ENCODE measurements at regions of chrX and their contacts with region 1.

Region 1: DNA sequence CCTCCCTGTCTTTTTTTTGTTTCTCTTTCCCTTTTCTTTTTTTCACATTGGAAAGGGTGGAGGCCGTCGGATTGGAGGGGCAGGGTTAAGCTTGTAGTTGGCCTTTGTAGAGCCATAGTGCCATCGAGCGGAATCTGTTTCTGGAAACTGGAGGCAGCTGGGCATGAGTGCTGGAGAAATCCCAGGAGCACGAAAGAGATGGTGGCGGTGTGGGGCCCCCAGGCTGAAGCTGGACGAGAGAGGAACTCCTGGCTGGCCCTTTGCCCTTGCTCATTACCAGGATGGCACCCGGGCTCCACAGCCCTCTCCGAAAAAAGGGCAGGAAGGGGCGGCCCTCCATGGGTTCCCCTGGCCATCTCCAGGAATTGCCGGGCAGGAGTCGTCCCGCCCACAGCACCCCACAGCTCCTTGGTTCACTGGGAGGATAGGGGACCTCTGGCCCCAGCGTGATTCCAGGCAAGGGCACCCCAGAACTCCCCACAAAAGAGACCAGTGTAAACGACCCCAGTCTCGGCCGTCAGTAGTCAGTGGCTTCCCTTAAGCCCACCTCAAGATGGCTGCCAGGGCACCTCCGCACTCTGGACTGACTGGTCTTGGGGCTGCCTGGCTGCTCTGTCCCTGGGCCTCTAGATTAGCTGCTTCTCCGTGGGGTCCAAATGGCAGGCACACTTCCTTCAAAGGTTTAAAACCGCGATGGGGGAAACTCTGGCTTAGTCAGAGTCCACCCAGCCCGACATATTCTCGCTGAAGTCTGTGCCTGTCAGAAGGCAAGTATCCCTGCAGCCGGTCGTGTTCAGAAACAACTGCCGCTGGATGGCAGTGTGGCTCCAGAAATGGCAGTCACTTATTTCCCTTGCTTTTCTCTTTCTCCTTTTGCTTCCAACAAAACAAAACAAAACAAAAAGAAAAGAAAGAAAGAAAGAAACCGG is 74.1 kb downstream of the NBDY start:
- DNase-seq: peak; percentile 69
- H3K4me3 Mint-ChIP-seq: no peak overlapping the region
- H3K27ac Mint-ChIP-seq: peak overlapping the region; percentile 42
- H3K4me1 Mint-ChIP-seq: peaks cover 34% of the 10 kb centered on the region
- H3K27me3 Mint-ChIP-seq: no peaks in the 10 kb centered on the region

Region 2: DNA sequence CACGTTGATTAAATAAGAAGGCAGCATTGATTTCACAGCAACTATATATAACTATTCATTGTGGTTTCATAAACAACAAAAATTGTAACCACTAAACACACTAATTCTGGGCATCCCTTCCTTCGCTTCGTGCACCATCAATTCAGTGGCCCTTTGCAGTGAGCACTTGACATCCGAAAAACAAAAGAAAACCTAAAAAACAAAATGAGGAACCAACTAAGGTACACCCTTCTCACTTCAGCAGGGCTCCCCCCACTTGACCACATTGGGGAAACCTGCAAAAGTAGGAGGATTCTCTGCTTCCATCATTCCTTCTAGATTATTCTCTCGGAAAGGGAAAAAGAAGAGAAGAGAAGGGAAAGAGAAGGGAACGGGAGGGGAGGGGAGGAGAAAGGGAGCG is 45.9 kb before region 1 on chrX:
- CTCF ChIA-PET with region 1: no interaction called
- POLR2A ChIA-PET with region 1: no interaction called
- intact Hi-C with region 1: loop called (anchors 10 kb)
- DNase-seq: no peak
- H3K4me3 Mint-ChIP-seq: no peak overlapping the region
- H3K27ac Mint-ChIP-seq: no peak overlapping the region
- H3K4me1 Mint-ChIP-seq: peaks cover 33% of the 10 kb centered on the region
- H3K27me3 Mint-ChIP-seq: no peaks in the 10 kb centered on the region

Region 3: DNA sequence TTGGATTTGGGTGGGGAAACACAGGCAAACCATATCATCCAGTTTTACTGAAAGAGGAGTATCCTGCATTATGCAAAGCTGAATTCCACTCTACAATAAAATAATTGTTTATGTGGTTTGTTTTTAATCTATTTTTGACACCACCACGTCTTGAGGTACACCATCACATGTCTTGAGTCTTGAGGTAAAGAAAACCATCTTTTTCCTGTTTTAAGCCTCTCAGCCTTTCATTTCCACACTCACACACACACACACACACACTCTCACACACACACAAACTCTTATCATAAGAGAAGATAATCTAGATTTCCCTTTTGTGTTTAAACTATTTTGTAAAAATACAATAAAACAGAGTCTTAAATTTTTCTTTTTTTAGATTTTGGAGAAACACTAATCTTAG is 160.2 kb after region 1 on chrX:
- CTCF ChIA-PET with region 1: no interaction called
- POLR2A ChIA-PET with region 1: no interaction called
- intact Hi-C with region 1: no loop called
- DNase-seq: no peak
- H3K4me3 Mint-ChIP-seq: no peak overlapping the region
- H3K27ac Mint-ChIP-seq: no peak overlapping the region
- H3K4me1 Mint-ChIP-seq: peaks cover 7% of the 10 kb centered on the region
- H3K27me3 Mint-ChIP-seq: no peaks in the 10 kb centered on the region

Region 4: DNA sequence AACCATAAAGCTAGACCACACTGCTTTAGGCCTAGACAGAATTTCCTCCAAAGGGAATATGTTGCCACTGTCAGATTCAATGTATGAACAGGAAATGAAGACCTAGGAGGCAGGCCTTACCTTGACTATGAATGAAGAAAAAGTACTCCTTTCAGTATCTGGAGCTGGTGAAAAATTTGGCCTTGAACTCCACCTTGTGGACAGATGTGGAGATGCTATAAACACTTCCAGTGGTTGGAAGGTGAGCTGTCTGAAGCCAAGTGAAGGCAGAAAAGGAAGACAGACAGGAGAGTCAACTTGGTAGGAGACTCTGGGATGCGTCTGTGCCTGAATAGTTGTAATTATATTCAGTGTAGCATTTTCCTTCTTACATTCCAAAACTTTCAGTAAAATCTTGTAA is 175.0 kb after region 1 on chrX:
- CTCF ChIA-PET with region 1: interaction called, 15 read pairs
- POLR2A ChIA-PET with region 1: no interaction called
- intact Hi-C with region 1: loop called (anchors 1 kb)
- DNase-seq: peak; percentile 40
- H3K4me3 Mint-ChIP-seq: no peak overlapping the region
- H3K27ac Mint-ChIP-seq: no peak overlapping the region
- H3K4me1 Mint-ChIP-seq: no peaks in the 10 kb centered on the region
- H3K27me3 Mint-ChIP-seq: no peaks in the 10 kb centered on the region

Region 5: DNA sequence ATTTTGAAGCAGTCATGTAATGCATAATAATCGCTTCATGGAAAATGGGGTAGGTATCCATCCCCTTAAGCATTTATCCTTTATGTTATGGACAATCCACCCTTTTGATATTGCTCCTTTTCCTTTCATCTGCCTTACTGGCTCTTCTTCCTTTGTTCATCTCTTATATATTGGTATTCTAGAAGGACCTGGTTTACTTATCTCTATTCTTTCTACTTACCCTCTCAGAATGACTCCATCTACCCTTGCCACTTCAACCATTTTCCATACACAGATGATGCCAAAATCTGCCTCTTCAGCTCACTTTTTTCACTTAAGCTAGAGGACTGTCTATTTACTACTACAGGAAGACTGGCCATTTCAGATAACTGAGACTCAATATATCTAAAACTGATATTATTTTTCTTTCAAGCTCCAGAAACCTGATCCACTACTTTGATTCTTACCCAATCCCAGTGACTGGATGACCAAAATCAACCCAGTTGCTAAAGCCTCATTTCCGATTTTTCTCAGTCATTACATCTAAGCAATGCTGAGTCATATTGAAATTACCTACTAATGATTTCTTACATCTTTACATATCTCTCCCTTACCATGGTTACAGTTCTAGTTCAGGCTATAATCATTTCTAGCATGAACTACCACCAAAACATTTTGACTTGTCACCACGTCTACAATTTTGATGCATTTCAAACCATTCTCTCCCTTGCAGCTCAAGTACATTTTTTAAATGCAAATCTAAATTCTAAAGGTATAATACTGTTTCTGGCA is 577.0 kb after region 1 on chrX:
- CTCF ChIA-PET with region 1: no interaction called
- POLR2A ChIA-PET with region 1: no interaction called
- intact Hi-C with region 1: loop called (anchors 5 kb)
- DNase-seq: no peak
- H3K4me3 Mint-ChIP-seq: peak overlapping the region; percentile 20
- H3K27ac Mint-ChIP-seq: peak overlapping the region; percentile 87
- H3K4me1 Mint-ChIP-seq: peaks cover 17% of the 10 kb centered on the region
- H3K27me3 Mint-ChIP-seq: no peaks in the 10 kb centered on the region

Region 6: DNA sequence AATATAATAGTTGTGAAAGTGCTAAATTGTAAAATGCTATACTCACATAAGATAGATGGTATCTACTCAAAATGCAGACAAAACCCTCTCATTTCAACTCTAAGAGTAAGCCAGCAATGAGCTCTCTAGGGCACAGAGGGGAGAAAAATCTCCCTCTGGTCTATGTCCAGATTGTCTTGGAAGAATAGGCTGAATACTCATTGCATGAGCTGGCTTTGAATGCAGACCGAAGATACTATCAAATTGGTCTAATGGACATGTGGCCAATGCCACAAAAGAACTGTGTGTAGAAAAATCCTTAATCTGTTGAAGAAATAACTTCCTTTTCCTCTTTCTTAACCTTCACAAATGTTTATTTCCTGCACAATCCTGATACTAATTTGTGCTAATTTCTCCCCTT is 1103.6 kb after region 1 on chrX:
- CTCF ChIA-PET with region 1: no interaction called
- POLR2A ChIA-PET with region 1: no interaction called
- intact Hi-C with region 1: loop called (anchors 5 kb)
- DNase-seq: no peak
- H3K4me3 Mint-ChIP-seq: peak overlapping the region; percentile 46
- H3K27ac Mint-ChIP-seq: peak overlapping the region; percentile 33
- H3K4me1 Mint-ChIP-seq: peaks cover 43% of the 10 kb centered on the region
- H3K27me3 Mint-ChIP-seq: no peaks in the 10 kb centered on the region